ENCODE measurements at regions of chr2 and their contacts with region 1.

Region 1: DNA sequence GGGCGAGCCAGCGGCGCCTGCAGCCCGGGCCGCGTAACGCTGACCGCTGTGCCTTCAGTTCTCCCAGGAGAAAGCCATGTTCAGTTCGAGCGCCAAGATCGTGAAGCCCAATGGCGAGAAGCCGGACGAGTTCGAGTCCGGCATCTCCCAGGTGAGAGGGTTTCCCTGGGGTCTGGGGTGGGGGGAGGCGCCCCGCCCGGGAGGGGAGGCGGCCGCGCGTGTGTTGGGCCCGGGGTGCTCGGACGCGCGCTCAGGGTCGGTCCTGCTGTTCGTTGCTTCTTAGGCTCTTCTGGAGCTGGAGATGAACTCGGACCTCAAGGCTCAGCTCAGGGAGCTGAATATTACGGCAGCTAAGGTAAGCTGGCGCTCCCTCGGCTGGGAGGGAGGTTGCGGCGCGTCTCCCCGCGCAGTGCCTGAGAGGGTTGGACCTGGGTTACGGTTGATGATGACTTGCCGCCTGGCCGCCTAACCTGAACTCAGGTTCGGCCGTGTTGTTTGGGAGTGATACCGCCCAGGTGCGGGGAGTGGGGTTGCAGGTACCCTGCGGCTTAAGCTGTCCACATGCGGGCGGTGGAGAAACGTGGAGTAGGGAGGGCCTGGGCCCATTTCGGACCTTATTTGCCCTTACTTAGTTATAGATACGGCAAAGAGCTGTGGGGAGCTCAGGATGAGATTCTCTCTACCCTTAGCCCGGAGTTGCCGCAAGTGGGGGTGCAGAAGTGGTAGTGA is 638 bp downstream of the RPS7 start:
- DNase-seq: no peak
- ATAC-seq: peak; percentile 21
- H3K4me3 ChIP-seq: peak overlapping the region; percentile 100
- H3K27ac ChIP-seq: peak overlapping the region; percentile 35
- H3K4me1 ChIP-seq: peaks cover 30% of the 10 kb centered on the region
- H3K27me3 ChIP-seq: no peaks in the 10 kb centered on the region
- CTCF ChIP-seq: no peak

Region 2: GRCh38 chr2:3379647-3380534 is 195.8 kb before region 1 on chr2 and contains the start of gene TRAPPC12:
- CTCF ChIA-PET with region 1: no interaction called
- POLR2A ChIA-PET with region 1: no interaction called
- intact Hi-C with region 1: loop called (anchors 5 kb)
- DNase-seq: peak; percentile 89
- ATAC-seq: peak; percentile 71
- H3K4me3 ChIP-seq: peak within 1 kb of the TSS; percentile 92
- H3K27ac ChIP-seq: peak within 1 kb of the TSS; percentile 89
- H3K4me1 ChIP-seq: peaks cover 26% of the 10 kb centered on the region
- H3K27me3 ChIP-seq: no peaks in the 10 kb centered on the region
- CTCF ChIP-seq: peak; percentile 54
- total RNA-seq, gene TRAPPC12: 86.2 and 111 TPM in 2 replicates

Region 3: DNA sequence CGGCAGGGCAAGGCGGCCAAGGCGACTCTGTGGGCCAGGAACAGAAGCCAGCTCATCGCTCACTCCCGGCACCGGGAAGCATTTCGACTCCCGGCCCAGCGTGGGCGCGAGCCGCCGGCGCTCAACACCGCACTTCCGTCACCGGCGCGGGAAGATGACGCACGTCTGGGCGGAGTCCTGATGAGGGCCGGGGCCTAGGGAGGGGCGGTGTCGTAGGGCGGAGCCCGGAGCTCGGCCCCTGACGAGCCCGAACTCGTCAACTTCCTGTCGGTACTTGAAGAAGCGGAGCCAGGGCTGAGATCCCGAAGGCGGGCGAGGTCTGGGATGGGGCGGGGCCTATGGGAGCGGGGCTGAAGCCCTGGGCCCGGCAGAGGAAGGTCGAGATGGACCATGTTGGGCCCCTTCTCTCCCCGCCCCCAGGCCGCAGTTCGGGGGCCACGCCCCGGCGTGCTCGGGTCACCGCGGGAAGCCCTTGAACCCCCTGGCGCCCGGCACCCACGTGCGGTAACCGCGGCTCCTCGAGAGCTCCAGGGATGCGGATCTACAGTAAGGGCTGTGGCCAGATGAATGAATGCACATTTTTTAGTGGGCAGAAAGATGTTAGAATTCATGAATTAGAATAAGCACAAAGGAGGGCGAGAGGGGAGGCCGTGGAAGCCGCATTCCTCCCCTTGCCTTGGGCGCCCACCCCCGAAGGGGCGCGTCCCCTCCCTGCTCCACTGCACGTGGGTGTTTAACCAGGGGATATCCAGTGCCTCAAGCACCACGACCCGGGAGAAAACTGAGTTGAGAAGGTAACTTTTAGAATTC is 17.3 kb before region 1 on chr2 and contains the start of gene RNASEH1:
- CTCF ChIA-PET with region 1: no interaction called
- POLR2A ChIA-PET with region 1: interaction called, 14 read pairs
- intact Hi-C with region 1: loop called (anchors 1 kb)
- DNase-seq: peak; percentile 99
- ATAC-seq: peak; percentile 99
- H3K4me3 ChIP-seq: peak within 1 kb of the TSS; percentile 73
- H3K27ac ChIP-seq: peak within 1 kb of the TSS; percentile 63
- H3K4me1 ChIP-seq: peaks cover 17% of the 10 kb centered on the region
- H3K27me3 ChIP-seq: no peaks in the 10 kb centered on the region
- CTCF ChIP-seq: no peak
- total RNA-seq, gene RNASEH1: 44.5 and 51.1 TPM in 2 replicates